Panc1 (cell line): ENCODE measurements at regions of chr10 and their contacts with region 1.

Region 1: GRCh38 chr10:86521678-86522509 is at the start of gene WAPL:
- DNase-seq: peak; percentile 47
- ATAC-seq: peak; percentile 97
- H3K4me3 ChIP-seq: peak within 1 kb of the TSS; percentile 72 to 76
- H3K27ac ChIP-seq: peak within 1 kb of the TSS; percentile 93
- H3K4me1 ChIP-seq: peaks cover 39% of the 10 kb centered on the region
- H3K27me3 ChIP-seq: no peaks in the 10 kb centered on the region
- CTCF ChIP-seq: no peak
- total RNA-seq, gene WAPL: 56.2 TPM

Region 2: DNA sequence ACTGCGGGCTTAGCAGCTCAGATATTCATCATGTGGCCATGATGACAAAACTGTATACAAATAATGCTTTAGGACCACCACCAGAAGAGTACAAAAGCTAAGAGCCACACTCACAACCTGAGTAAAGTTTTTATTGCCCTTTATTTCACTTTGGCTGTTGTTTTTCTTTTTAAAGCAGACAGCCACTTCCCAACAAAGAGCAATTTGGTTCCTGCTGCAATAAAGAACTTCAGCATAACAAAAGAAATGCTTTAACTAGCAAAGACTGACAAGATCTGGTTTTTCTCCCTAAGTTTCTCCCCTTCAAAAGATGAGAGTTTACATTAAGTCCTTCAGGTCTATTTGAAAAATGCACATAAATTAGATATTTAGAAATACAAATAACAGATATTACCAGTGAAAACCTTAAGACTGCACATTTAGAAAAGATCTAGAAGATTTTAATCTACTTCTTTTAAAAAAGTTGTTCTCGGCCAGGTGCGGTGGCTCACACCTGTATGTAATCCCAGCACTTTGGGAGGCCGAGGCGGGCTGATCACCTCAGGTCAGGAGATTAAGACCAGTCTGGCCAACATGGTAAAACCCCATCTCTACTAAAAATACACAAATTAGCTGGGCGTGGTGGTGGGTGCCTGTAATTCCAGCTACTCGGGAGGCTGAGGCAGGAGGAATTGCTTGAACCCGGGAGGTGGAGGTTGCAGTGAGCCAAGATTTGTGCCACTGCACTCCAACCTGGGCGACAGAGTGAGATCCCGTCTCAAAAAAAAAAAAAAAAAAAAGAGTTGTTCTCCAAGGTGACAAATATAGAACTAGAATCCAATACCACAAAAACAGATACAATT is 59.7 kb before region 1 on chr10:
- CTCF ChIA-PET with region 1: no interaction called
- POLR2A ChIA-PET with region 1: no interaction called
- in situ Hi-C with region 1: no loop called
- intact Hi-C with region 1: no loop called
- DNase-seq: no peak
- ATAC-seq: no peak
- H3K4me3 ChIP-seq: no peak overlapping the region
- H3K27ac ChIP-seq: no peak overlapping the region
- H3K4me1 ChIP-seq: no peaks in the 10 kb centered on the region
- H3K27me3 ChIP-seq: no peaks in the 10 kb centered on the region
- CTCF ChIP-seq: no peak

Region 3: DNA sequence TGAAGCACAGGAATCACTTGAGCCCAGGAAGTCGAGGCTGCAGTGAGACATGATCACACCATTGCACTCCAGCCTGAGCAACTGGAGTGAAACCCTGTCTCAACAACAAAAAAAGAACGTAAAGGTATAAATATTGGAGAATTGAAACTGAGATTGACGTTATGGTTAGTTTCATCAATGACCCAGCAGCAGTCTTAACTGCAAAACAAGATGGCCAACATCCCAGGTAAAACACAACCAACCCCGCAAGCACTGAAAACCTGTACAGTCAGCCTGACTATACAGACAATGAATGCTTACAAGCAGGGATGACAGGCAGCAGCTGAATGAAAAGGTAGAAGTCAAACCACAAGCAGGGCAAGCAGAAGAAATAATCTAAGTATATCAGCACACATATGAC is 35.0 kb before region 1 on chr10:
- CTCF ChIA-PET with region 1: no interaction called
- POLR2A ChIA-PET with region 1: no interaction called
- in situ Hi-C with region 1: no loop called
- intact Hi-C with region 1: loop called (anchors 2 kb)
- DNase-seq: no peak
- ATAC-seq: no peak
- H3K4me3 ChIP-seq: no peak overlapping the region
- H3K27ac ChIP-seq: no peak overlapping the region
- H3K4me1 ChIP-seq: no peaks in the 10 kb centered on the region
- H3K27me3 ChIP-seq: no peaks in the 10 kb centered on the region
- CTCF ChIP-seq: no peak

Region 4: DNA sequence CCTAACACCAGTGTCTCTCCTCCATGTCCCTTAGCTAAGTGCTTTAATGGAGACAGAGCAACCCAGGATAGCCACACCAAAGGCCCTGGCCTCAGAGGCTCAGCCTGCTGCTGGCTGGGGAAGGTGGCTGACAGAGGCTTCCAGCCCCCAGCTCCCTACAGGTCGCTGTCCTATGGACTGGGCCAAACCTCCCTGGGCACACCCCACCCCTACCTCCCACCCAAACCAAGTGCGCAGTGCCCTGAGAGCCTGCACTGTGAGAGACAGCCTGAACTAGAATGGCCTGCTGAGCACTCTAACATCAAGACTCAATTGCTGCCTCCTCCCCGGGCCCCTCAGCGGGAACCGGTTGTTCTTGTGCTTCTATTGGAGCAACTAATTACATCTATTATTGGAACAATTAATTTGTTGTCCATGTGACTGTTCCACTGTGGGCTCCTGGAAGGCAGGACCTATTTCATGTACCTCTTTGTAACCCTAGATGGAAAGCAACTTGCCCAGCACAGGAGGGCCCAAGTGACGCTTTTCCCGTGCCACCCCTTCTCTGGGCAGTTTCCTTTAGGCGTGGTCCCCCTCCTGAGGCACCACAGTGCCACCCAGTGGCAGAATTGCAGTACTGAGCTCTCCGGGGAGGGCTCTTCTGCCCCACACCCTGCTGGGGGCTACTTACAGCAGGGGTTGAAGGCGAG is 63.3 kb after region 1 on chr10:
- CTCF ChIA-PET with region 1: no interaction called
- POLR2A ChIA-PET with region 1: no interaction called
- in situ Hi-C with region 1: no loop called
- intact Hi-C with region 1: loop called (anchors 5 kb)
- DNase-seq: peak; percentile 64
- ATAC-seq: peak; percentile 96
- H3K4me3 ChIP-seq: no peak overlapping the region
- H3K27ac ChIP-seq: peak overlapping the region; percentile 30
- H3K4me1 ChIP-seq: no peaks in the 10 kb centered on the region
- H3K27me3 ChIP-seq: no peaks in the 10 kb centered on the region
- CTCF ChIP-seq: peak; percentile 98

Region 5: DNA sequence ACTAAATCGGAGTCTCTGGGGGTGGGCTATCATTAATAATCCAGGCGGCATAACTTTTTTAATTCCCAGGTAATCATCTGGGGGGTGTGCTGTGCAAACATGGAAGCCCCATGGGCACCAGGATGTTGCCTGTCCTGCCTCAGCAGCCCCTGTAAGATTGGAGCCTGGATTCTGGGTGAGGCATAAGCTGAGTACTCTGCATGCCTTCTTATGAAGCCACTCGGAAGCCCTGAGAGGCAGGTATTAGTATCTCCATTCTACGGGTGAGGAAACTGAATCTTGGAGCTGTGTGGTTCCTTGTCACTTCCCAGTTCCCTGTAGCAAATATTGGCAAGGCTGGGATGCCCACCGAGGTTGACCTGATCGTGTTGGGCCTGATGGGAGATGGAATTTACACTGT is 125.0 kb after region 1 on chr10:
- CTCF ChIA-PET with region 1: no interaction called
- POLR2A ChIA-PET with region 1: interaction called, 10 read pairs
- in situ Hi-C with region 1: no loop called
- intact Hi-C with region 1: no loop called
- DNase-seq: no peak
- ATAC-seq: no peak
- H3K4me3 ChIP-seq: no peak overlapping the region
- H3K27ac ChIP-seq: peak overlapping the region; percentile 57; the same call in 1 of the 2 replicates
- H3K4me1 ChIP-seq: peaks cover 34% of the 10 kb centered on the region
- H3K27me3 ChIP-seq: peaks cover 2% of the 10 kb centered on the region; the same call in 1 of the 2 replicates
- CTCF ChIP-seq: no peak

Region 6: DNA sequence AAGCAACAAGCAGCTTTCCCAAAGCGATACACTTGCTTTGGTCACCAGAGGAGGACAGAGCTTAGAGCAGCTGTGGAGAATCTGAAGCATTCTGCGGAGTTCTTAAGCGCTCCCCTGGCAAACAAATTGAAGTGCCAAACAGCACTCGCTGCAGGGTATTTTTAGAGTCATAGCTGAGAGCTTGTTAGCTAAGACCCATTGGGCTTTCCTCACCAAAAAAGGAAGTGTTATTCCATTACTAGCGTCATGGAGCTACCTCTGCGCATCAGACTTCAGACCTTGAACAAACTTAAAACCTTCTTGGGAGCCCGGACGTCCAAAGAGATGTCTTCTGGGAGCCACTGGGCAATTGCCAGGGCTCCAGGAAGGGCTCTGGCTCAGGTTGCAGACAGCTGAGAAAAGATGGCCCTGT is 211.4 kb after region 1 on chr10:
- CTCF ChIA-PET with region 1: no interaction called
- POLR2A ChIA-PET with region 1: interaction called, 15 read pairs
- in situ Hi-C with region 1: no loop called
- intact Hi-C with region 1: no loop called
- DNase-seq: no peak
- ATAC-seq: no peak
- H3K4me3 ChIP-seq: no peak overlapping the region
- H3K27ac ChIP-seq: no peak overlapping the region
- H3K4me1 ChIP-seq: no peaks in the 10 kb centered on the region
- H3K27me3 ChIP-seq: no peaks in the 10 kb centered on the region
- CTCF ChIP-seq: no peak